Activated T-helper 1 cell treated with anti-CD3 and anti-CD28 coated beads, Interleukin-12 subunit alpha, Interleukin-12 subunit beta, Interleukin-2, Interleukin-4 antibody, amounts not matched to agents 30 ng/mL and 10 ng/mL and 1 ng/mL, durations not matched to agents 14 hours and 24 hours and 36 hours (primary cell): ENCODE measurements at regions of chr7 and their contacts with region 1.

Region 1: GRCh38 chr7:159127691-159128642 is 16.7 kb downstream of the VIPR2 start:
- DNase-seq: no peak
- H3K4me3 Mint-ChIP-seq: no peak overlapping the region
- H3K27ac Mint-ChIP-seq: no peak overlapping the region
- H3K4me1 Mint-ChIP-seq: no peaks in the 10 kb centered on the region
- H3K27me3 Mint-ChIP-seq: peaks cover 10% of the 10 kb centered on the region

Region 2: DNA sequence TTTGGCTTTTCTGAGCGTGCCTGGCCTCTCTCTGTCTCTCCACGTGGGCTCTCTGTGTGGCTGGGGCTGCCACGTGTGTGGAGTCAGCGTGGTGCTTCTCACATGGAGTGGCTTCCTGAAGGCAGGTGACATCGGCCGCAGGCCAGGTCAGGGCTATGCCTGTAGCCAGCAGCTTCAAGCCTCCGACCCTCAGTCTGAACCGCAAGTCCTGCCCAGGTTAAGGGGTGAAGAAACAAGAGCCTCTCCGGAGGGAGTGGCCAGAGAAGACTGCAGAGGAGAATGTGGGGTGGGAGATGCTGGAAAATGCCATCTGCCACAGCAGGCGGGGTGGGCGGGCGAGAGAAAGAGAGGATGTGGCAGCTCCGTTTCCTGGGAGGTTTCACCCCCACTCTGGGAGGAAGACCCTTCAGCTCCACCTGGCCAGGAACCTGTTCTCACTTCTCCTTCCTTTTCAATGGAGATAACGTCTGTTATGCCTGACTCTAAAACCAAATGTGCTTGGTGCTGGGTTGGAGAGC is 31.0 kb after region 1 on chr7:
- intact Hi-C with region 1: loop called (anchors 1 kb)
- DNase-seq: no peak
- H3K4me3 Mint-ChIP-seq: no peak overlapping the region
- H3K27ac Mint-ChIP-seq: no peak overlapping the region
- H3K4me1 Mint-ChIP-seq: no peaks in the 10 kb centered on the region
- H3K27me3 Mint-ChIP-seq: no peaks in the 10 kb centered on the region